ENCODE measurements at regions of chr12 and their contacts with region 1.

Region 1: GRCh38 chr12:6335451-6336078 is 6.3 kb downstream of the TNFRSF1A start:
- DNase-seq: peak; percentile 88
- ATAC-seq: peak; percentile 30
- H3K4me3 ChIP-seq: peak overlapping the region; percentile 15
- H3K27ac ChIP-seq: peak overlapping the region; percentile 94
- H3K4me1 ChIP-seq: peaks cover 64% of the 10 kb centered on the region
- H3K27me3 ChIP-seq: no peaks in the 10 kb centered on the region
- CTCF ChIP-seq: peak; percentile 69
- POLR2A ChIP-seq: peak; percentile 64
- RAD21 ChIP-seq: peak; percentile 67

Region 2: DNA sequence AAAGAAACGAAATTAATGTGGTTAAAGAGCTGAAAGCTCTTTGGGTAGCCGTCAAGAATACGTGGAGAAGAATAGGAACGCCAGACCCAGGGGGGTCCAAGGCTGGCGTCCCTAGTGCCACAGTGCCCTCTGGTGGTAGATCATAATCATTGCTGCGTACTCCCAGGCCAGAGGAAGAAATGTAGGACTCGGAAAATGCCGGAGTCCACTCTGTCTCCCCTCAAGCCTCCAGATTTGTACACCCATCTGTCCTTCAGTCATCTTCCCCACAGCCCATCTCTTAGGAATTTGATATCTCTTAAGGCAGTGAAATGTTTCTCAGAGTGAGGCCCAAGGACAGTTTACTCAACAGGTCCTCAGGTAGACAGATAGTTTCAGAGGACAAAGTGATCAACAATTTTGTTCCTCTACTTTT is 50.5 kb before region 1 on chr12:
- CTCF ChIA-PET with region 1: no interaction called
- POLR2A ChIA-PET with region 1: interaction called, 13 read pairs
- dilution Hi-C with region 1: no loop called
- in situ Hi-C with region 1: no loop called
- intact Hi-C with region 1: no loop called
- DNase-seq: peak; percentile 76
- ATAC-seq: peak; percentile 56
- H3K4me3 ChIP-seq: no peak overlapping the region
- H3K27ac ChIP-seq: no peak overlapping the region
- H3K4me1 ChIP-seq: peaks cover 18% of the 10 kb centered on the region
- H3K27me3 ChIP-seq: no peaks in the 10 kb centered on the region
- CTCF ChIP-seq: peak; percentile 96
- POLR2A ChIP-seq: peak; percentile 44; the same call in 1 of the 2 replicates
- RAD21 ChIP-seq: peak; percentile 99

Region 3: GRCh38 chr12:6312529-6313325 is 22.8 kb before region 1 on chr12:
- CTCF ChIA-PET with region 1: no interaction called
- POLR2A ChIA-PET with region 1: no interaction called
- dilution Hi-C with region 1: no loop called
- in situ Hi-C with region 1: no loop called
- intact Hi-C with region 1: no loop called
- DNase-seq: no peak
- ATAC-seq: peak; percentile 55
- H3K4me3 ChIP-seq: no peak overlapping the region
- H3K27ac ChIP-seq: no peak overlapping the region
- H3K4me1 ChIP-seq: peaks cover 10% of the 10 kb centered on the region
- H3K27me3 ChIP-seq: peaks cover 24% of the 10 kb centered on the region
- CTCF ChIP-seq: no peak
- POLR2A ChIP-seq: no peak
- RAD21 ChIP-seq: no peak

Region 4: DNA sequence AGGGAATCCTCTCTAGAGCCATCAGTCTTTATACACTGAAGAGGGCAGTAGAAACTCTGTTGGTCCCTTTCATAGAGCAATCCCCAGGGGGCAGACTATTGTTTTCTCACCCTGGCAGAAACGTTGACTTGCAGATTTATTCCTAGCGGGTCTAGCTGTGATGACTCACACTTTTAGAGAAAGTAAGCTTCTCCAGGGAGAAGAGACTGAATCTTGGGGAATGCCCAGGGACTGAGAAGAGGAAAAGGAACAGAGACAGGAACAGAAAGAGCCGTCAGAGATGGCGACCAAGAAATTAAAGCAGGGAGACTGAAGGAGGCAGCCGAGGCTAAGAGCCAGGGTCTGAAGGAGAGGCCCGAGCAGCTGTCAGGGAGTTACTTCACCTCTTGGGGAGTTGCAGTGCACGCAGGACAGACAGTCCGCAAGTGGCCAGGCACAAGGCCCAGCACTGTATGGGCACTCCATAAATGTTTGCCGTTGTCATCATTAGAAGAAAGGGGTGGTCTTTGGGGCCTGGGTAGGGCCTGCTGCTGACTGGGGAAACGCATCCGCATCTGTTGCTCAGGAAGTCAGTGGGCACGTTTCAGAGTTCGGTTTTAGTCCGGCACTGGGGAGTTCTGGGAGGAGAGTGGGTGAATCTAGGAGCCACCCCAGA is 12.1 kb before region 1 on chr12:
- CTCF ChIA-PET with region 1: interaction called, 4 read pairs
- POLR2A ChIA-PET with region 1: interaction called, 14 read pairs
- dilution Hi-C with region 1: no loop called
- in situ Hi-C with region 1: no loop called
- intact Hi-C with region 1: no loop called
- DNase-seq: peak; percentile 94
- ATAC-seq: peak; percentile 64
- H3K4me3 ChIP-seq: no peak overlapping the region
- H3K27ac ChIP-seq: peak overlapping the region; percentile 48
- H3K4me1 ChIP-seq: peaks cover 25% of the 10 kb centered on the region
- H3K27me3 ChIP-seq: no peaks in the 10 kb centered on the region
- CTCF ChIP-seq: peak; percentile 84
- POLR2A ChIP-seq: no peak; the same call in 1 of the 2 replicates
- RAD21 ChIP-seq: peak; percentile 58

Region 5: GRCh38 chr12:6372403-6373003 is 36.9 kb after region 1 on chr12:
- CTCF ChIA-PET with region 1: interaction called, 5 read pairs
- POLR2A ChIA-PET with region 1: interaction called, 3 read pairs
- dilution Hi-C with region 1: no loop called
- in situ Hi-C with region 1: loop called (anchors 5 kb)
- intact Hi-C with region 1: loop called (anchors 2 kb)
- DNase-seq: peak; percentile 69
- ATAC-seq: peak; percentile 83
- H3K4me3 ChIP-seq: no peak overlapping the region
- H3K27ac ChIP-seq: peak overlapping the region; percentile 92
- H3K4me1 ChIP-seq: peaks cover 33% of the 10 kb centered on the region
- H3K27me3 ChIP-seq: no peaks in the 10 kb centered on the region
- CTCF ChIP-seq: no peak
- POLR2A ChIP-seq: no peak
- RAD21 ChIP-seq: no peak

Region 6: DNA sequence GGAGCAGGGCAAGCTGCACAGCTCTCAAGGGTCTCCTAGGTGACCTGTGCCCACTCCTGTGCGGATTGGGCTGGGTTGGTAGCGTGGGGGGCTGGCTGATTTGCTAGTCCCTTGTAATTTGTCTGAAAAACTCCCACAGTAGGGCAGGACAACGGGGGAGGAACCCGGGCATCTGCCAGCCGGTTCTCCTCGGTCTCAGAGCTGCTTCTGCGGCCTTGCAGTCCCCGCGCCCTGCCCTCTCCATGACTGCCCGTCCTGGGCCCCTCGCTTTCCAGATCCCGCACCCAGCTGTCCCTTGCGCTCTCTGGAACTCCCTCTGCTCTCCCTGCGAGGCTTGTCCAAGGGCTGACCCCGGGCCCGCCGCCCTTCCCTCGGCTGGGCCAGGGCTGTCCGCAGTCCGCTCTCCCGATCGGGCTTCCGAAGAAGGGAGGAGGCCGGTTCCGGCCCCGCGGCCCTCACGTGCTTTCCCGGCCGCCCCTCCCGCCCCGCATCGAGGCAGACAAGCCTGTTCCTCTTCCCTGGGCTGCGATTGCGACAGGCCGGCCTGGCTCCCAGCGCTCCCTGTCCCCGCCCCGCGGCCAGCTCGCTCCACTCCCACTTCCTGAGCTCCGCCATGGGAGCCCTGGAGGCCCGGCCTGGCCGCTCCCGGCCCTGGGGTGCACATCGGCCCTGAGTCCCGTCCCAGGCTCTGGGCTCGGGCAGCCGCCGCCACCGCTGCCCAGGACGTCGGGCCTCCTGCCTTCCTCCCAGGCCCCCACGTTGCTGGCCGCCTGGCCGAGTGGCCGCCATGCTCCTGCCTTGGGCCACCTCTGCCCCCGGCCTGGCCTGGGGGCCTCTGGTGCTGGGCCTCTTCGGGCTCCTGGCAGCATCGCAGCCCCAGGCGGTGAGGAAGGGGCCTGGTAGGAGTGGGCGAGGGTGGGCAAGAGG is 48.3 kb after region 1 on chr12 and contains the start of gene LTBR:
- CTCF ChIA-PET with region 1: interaction called, 4 read pairs
- POLR2A ChIA-PET with region 1: interaction called, 6 read pairs
- dilution Hi-C with region 1: no loop called
- in situ Hi-C with region 1: no loop called
- intact Hi-C with region 1: loop called (anchors 1 kb)
- DNase-seq: peak; percentile 90
- ATAC-seq: peak; percentile 96
- H3K4me3 ChIP-seq: peak within 1 kb of the TSS; percentile 69
- H3K27ac ChIP-seq: peak within 1 kb of the TSS; percentile 94
- H3K4me1 ChIP-seq: peaks cover 20% of the 10 kb centered on the region
- H3K27me3 ChIP-seq: no peaks in the 10 kb centered on the region
- CTCF ChIP-seq: 0 out of 2 replicates have a peak, but pooled peaks have one; percentile 16
- POLR2A ChIP-seq: peak; percentile 79
- RAD21 ChIP-seq: peak; percentile 38
- total RNA-seq, gene LTBR: 19.7 and 24.7 TPM in 2 replicates

Region 7: DNA sequence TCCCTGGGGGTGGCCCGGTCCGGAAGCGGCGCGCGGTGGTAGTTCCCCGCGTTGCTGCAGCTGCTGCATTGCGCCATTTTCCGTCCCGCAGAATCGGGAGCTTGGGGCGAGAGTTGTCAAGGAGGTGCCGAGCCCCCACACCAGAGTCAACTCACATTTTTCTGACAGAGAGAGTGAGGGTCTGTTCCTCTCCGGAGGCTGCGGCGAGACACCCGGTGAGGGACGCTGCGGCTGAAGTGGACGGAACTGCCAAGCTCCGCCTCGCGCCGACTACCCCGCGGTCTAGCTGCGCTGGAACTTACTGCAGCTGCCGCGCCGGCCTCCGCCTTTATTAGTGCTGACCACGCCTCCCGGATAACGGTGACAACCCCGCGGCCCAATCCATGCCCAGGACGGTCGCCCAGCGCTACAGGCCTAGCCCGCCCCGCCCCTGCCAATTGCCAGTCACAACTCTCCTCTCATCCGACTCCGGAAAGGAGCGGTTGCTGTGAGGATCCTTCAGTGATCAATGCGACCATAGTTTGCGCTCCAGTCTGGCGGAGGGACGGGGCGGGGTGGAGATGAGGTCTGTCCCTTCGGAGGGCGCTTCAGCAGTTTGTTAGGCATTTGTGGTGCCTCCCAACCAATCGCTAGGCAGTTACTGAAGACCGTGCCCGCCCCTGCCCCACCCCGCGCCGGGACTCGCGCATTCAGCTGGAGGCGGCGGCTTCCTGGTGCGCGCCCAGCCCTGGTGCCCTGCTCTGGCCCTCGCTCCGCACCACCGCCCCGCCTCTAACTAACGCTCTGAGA is 135.0 kb after region 1 on chr12 and contains the start of gene VAMP1:
- CTCF ChIA-PET with region 1: interaction called, 5 read pairs
- POLR2A ChIA-PET with region 1: interaction called, 4 read pairs
- dilution Hi-C with region 1: no loop called
- in situ Hi-C with region 1: no loop called
- intact Hi-C with region 1: loop called (anchors 1 kb)
- DNase-seq: peak; percentile 96
- ATAC-seq: peak; percentile 96
- H3K4me3 ChIP-seq: peak within 1 kb of the TSS; percentile 78
- H3K27ac ChIP-seq: peak within 1 kb of the TSS; percentile 89
- H3K4me1 ChIP-seq: peaks cover 4% of the 10 kb centered on the region
- H3K27me3 ChIP-seq: no peaks in the 10 kb centered on the region
- CTCF ChIP-seq: no peak
- POLR2A ChIP-seq: peak; percentile 99
- RAD21 ChIP-seq: no peak
- total RNA-seq, gene VAMP1: 7.2 and 7.5 TPM in 2 replicates

Region 8: GRCh38 chr12:6540181-6540877 is 204.8 kb after region 1 on chr12:
- CTCF ChIA-PET with region 1: no interaction called
- POLR2A ChIA-PET with region 1: no interaction called
- dilution Hi-C with region 1: no loop called
- in situ Hi-C with region 1: loop called (anchors 10 kb)
- intact Hi-C with region 1: no loop called
- DNase-seq: peak; percentile 93
- ATAC-seq: peak; percentile 70
- H3K4me3 ChIP-seq: no peak overlapping the region
- H3K27ac ChIP-seq: peak overlapping the region; percentile 65
- H3K4me1 ChIP-seq: peaks cover 11% of the 10 kb centered on the region; the same call in 1 of the 2 replicates
- H3K27me3 ChIP-seq: no peaks in the 10 kb centered on the region
- CTCF ChIP-seq: no peak; the same call in 1 of the 2 replicates
- POLR2A ChIP-seq: no peak
- RAD21 ChIP-seq: no peak

Measured in IMR-90 (cell line).